ENCODE measurements at regions of chr2 and their contacts with region 1.

Region 1: GRCh38 chr2:65432227-65433190 is at the start of gene SPRED2:
- DNase-seq: peak; percentile 85 to 89
- ATAC-seq: peak; percentile 42 to 44
- H3K4me3 ChIP-seq: peak within 1 kb of the TSS; percentile 79 to 88 (median 84)
- H3K27ac ChIP-seq: peak within 1 kb of the TSS; percentile 75 to 88 (median 84)
- H3K4me1 ChIP-seq: peaks cover 22 to 23% of the 10 kb centered on the region in 2 donors
- H3K27me3 ChIP-seq: no peaks in the 10 kb centered on the region
- CTCF ChIP-seq: peak in 1 of 5 experiments; percentile 25
- POLR2A ChIP-seq: peak; percentile 70 to 81
- total RNA-seq, gene SPRED2: 4.1 to 12.5 (median 7.4) TPM

Region 2: GRCh38 chr2:64523666-64524603 is 908.6 kb before region 1 on chr2 and contains the start of gene AFTPH:
- in situ Hi-C with region 1: no loop called
- intact Hi-C with region 1: loop called (anchors 10 kb)
- DNase-seq: peak; percentile 99
- ATAC-seq: peak; percentile 94 to 95
- H3K4me3 ChIP-seq: peak within 1 kb of the TSS; percentile 86 to 97 (median 90)
- H3K27ac ChIP-seq: peak within 1 kb of the TSS; percentile 91 to 97 (median 94)
- H3K4me1 ChIP-seq: peaks cover 29 to 32% of the 10 kb centered on the region in 2 donors
- H3K27me3 ChIP-seq: no peaks in the 10 kb centered on the region
- CTCF ChIP-seq: no peak
- POLR2A ChIP-seq: peak; percentile 93 to 97
- total RNA-seq, gene AFTPH: 13.9 to 18.1 (median 14.8) TPM

Region 3: DNA sequence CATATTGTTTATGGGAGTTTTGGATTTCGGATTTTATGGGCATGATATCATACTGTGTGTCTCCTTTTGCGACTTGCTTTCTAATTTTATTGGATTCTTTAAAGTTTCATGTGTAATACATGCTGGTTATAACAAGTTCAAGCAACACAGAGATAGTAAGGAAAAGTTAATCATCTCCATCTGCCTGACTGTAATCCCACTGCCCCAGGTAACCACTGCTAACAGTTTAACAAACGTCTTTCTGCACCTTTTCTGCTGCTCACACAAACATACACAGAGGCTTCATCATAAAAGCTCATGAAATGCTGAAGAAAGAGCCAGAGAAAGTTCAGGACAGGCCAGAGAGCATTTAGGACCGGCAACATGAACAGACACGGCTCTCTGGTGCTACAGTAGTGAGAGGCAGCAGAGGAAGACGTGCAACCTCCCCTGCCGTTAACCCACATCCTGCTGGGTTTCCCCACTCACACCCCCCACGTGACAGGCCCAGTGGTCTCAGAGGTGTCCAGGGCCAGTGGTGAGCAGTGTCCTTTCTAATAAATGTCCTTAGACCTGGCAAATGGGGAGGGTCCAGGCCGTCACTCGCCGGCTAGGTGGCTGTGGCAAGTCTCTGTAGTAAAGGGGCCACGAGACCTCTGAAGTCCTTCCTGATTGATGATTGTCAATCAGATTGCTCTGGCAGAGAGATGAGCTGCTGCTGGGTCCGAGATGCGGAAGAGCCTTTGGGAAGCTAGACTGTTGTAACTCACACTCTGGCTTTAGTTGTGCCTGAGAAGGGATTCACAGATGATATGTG is 486.3 kb before region 1 on chr2:
- in situ Hi-C with region 1: no loop called
- intact Hi-C with region 1: loop called (anchors 10 kb)
- DNase-seq: no peak
- ATAC-seq: no peak
- H3K4me3 ChIP-seq: no peak overlapping the region
- H3K27ac ChIP-seq: no peak overlapping the region
- H3K4me1 ChIP-seq: peaks cover 34 to 39% of the 10 kb centered on the region in 2 donors
- H3K27me3 ChIP-seq: no peaks in the 10 kb centered on the region
- CTCF ChIP-seq: no peak
- POLR2A ChIP-seq: no peak

Region 4: DNA sequence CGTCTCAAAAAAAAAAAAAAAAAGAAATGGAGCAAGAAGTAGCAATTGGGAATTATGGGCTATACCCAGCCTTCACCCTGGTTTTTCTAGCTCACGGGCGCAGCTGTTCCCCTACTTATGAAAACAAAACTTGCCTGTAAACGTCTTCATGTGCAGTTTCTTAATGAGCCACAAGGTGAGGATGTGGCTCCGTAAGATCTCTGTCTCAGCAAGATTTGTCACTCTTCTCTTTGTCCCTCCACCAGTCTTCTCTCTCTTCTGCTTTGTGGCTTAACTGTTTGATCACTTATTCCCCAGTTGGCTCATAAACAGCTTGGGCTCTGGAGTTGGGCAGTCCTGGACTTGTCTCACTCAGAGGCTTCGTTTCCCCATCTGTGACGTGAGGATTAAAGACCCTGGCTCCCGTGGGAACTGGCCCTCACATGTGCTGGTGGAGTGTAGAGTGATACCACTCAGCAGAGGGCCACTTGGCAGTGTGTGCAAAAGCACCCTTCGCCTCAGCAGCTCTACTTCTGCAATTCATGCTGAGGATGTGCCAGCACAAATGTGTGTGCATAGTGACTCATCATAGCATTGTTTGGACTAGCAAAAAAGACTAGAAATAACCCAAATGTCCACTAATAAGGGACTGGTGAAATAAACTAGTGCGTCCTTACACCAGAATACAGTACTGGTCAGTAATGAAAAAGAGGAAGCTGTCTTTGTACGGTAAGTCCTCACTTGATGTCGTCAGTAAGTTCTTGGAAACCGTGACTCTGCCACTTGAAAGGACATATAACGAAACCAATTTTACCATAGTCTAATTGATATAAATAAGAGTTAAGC is 367.6 kb before region 1 on chr2:
- in situ Hi-C with region 1: loop called in 1 of 4 experiments (anchors 25 kb)
- intact Hi-C with region 1: loop called (anchors 2 kb)
- DNase-seq: peak; percentile 50 to 78
- ATAC-seq: peak; percentile 60 to 73
- H3K4me3 ChIP-seq: peak overlapping the region in 3 of 4 donors; percentile 3 to 34 (median 23)
- H3K27ac ChIP-seq: peak overlapping the region; percentile 90 to 96 (median 92)
- H3K4me1 ChIP-seq: peaks cover 93 to 95% of the 10 kb centered on the region in 2 donors
- H3K27me3 ChIP-seq: no peaks in the 10 kb centered on the region
- CTCF ChIP-seq: peak; percentile 76 to 90 (median 83)
- POLR2A ChIP-seq: peak; percentile 10 to 56

Region 5: GRCh38 chr2:65264821-65265670 is 167.5 kb before region 1 on chr2:
- in situ Hi-C with region 1: loop called in 3 of 4 experiments (anchors 10 to 25 kb)
- intact Hi-C with region 1: loop called (anchors 2 kb)
- DNase-seq: no peak
- ATAC-seq: peak; percentile 56 to 75
- H3K4me3 ChIP-seq: no peak overlapping the region
- H3K27ac ChIP-seq: no peak overlapping the region
- H3K4me1 ChIP-seq: peaks cover 2 to 14% of the 10 kb centered on the region in 2 donors
- H3K27me3 ChIP-seq: no peaks in the 10 kb centered on the region
- CTCF ChIP-seq: peak; percentile 55 to 68 (median 65)
- POLR2A ChIP-seq: no peak

Region 6: DNA sequence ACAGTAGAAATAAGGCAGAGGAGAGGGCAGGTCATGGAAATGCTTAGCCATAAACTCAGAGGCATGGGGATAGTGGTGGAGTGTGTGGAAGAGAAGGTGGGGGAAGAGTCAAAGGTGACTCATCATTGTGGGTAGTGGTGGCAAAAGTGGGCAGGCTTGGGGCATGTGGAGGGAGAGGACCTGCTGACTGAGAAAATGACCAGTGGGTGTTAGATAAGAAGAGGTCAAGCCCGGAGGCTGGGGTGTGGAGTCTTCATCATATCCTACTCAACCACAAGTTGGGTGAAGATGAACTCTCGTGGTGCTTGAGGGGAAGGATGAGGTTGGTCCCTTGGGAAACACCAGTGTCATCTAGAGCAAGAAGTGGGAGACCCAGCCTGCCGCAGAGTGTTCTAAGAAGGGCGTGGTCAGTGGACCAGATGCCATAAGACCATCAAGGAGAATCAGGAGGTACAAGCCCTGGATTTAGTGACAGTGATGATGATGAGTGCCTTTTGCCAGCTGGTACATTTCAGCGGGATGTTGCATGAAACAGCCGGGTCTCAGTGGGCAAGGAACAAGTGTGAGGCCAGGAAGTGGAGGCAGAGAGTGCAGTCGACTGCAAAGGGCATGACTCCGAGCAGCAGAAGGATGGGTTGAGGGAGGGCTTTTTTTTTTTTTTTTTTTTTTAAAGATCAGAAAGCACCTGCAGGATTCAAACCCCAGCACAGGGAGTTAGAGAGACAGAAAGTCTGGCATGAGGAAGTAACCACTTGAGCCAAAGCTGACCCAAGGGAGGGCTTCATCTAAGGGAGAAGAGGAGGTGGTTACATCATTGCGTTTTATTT is 122.5 kb after region 1 on chr2:
- in situ Hi-C with region 1: no loop called
- intact Hi-C with region 1: loop called (anchors 2 kb)
- DNase-seq: no peak
- ATAC-seq: no peak
- H3K4me3 ChIP-seq: no peak overlapping the region
- H3K27ac ChIP-seq: no peak overlapping the region
- H3K4me1 ChIP-seq: peaks cover 0 to 5% of the 10 kb centered on the region in 2 donors
- H3K27me3 ChIP-seq: no peaks in the 10 kb centered on the region
- CTCF ChIP-seq: no peak
- POLR2A ChIP-seq: no peak

Region 7: DNA sequence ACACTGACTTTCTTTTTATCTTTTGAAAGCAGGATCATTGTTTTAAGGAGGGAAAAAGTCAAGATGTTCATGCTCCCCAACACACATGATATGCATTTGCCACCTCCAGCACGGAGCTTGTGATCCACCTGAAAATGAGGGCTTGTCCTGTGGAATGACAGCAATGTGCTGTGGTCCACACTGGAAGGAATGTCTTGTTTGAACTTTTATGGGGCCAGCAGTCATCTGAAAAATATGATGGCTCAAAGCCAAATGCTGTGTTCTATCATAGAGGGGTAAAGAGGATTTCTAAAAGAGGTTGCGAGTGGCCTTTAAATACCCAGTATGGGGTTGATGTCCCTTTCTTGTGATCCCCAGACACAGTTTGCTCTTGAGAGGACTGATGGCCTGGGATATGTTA is 226.4 kb after region 1 on chr2:
- in situ Hi-C with region 1: no loop called
- intact Hi-C with region 1: no loop called
- DNase-seq: no peak
- ATAC-seq: no peak
- H3K4me3 ChIP-seq: no peak overlapping the region
- H3K27ac ChIP-seq: no peak overlapping the region
- H3K4me1 ChIP-seq: peaks cover 6 to 10% of the 10 kb centered on the region in 2 donors
- H3K27me3 ChIP-seq: peaks cover 0 to 6% (median 0%) of the 10 kb centered on the region in 3 donors
- CTCF ChIP-seq: no peak
- POLR2A ChIP-seq: no peak

Measured in gastrocnemius medialis (tissue), 4 donors.